HepG2 (cell line): ENCODE measurements at regions of chr10 and their contacts with region 1.

Region 1: DNA sequence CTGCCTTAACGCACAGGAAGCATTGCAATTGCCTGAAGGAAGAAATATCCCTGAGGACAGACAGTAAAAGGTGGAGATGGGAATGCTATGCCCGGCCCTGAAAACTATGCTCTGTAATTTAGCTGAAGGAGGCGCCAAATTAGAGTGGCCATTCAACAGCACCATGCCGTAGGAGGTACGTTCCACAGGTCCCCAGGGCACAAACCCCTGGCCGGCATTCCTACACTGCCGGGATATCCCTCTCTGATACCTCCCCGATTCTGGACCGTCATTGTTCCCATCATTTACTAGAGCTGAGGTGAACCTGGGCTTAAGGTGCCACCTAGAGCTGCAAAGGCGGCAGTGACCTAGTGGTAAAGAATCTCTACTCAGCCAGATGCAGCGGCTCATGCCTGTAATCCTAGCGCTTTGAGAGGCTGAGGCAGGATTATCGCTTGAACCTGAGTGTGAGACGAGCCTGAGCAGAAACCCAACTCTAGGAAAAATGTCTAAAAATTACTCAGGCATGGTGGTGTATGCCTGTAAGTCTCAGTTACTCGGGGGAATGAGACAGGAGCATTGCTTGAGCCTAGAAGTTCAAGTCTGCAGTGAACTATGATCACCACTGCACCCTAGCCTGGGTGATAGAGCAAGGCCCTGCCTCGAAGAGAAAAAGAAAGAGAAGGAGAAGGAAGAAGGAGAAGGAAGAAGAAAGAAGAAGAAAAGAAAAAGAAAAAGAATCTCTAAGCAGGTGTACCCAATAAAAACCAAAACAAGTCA is 53.0 kb upstream of the TNKS2 start:
- DNase-seq: peak; percentile 50
- ATAC-seq: peak; percentile 100
- H3K4me3 ChIP-seq: peak overlapping the region in 1 of 3 experiments; percentile 33; a peak in 2 of 6 replicates
- H3K27ac ChIP-seq: no peak overlapping the region
- H3K4me1 ChIP-seq: peaks cover 11% of the 10 kb centered on the region
- H3K27me3 ChIP-seq: no peaks in the 10 kb centered on the region
- CTCF ChIP-seq: peak; percentile 89
- EP300 ChIP-seq: no peak
- POLR2A ChIP-seq: no peak
- RAD21 ChIP-seq: peak; percentile 62; the same call in 1 of the 2 replicates

Region 2: DNA sequence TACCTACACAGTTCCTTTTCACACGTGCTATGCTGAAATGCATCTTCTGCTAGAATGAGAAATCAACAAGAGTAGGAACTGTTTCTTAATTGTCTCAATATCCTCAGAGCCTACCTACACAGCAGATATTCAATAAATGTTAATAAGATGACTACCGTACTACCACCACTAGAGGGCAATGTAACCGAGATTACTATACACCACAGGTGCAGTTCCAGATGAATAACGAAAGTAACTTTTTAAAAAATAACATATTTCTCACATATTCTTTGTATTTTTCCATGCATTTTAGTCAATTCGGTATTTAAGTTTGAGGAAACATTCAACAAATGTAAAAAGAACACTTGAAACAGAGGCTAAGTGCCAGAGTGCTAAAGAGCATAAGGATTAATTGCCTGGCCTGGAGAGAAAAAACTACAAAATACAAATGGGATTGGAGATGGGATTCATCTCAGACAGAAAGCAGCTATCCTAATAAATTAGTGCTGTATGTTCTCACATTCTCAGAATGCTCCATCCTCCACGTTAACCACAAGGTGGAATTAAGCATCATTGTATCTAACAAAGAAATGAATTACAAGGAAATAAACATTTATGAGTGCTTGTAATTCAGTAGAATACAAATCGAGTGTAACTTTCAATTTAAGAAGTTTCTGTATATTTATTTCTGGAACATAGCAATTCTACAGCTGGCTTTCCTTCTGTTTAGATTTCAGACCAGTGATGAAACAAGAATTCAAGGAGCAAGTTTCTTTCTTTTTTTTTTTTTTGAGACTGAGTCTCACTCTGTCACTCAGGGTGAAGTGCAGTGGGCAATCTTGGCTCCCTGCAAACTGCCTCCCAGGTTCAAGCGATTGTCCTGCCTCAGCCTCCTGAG is 355.4 kb before region 1 on chr10:
- CTCF ChIA-PET with region 1: interaction called, 4 read pairs
- POLR2A ChIA-PET with region 1: no interaction called
- in situ Hi-C with region 1: no loop called
- intact Hi-C with region 1: loop called (anchors 5 kb)
- DNase-seq: peak; percentile 54
- ATAC-seq: peak; percentile 88
- H3K4me3 ChIP-seq: peak overlapping the region in 2 of 3 experiments; percentile 12 to 22; a peak in 2 of 6 replicates
- H3K27ac ChIP-seq: no peak overlapping the region
- H3K4me1 ChIP-seq: peaks cover 8% of the 10 kb centered on the region; the same call in 1 of the 2 replicates
- H3K27me3 ChIP-seq: peaks cover 0 to 9% of the 10 kb centered on the region in 2 experiments; a peak in 2 of 5 replicates
- CTCF ChIP-seq: peak; percentile 67
- EP300 ChIP-seq: no peak
- POLR2A ChIP-seq: no peak
- RAD21 ChIP-seq: 0 out of 2 replicates have a peak, but pooled peaks have one; percentile 26

Region 3: GRCh38 chr10:91409869-91410637 is 335.2 kb before region 1 on chr10 and contains the start of gene HECTD2:
- CTCF ChIA-PET with region 1: no interaction called
- POLR2A ChIA-PET with region 1: no interaction called
- in situ Hi-C with region 1: no loop called
- intact Hi-C with region 1: loop called (anchors 10 kb)
- DNase-seq: peak; percentile 49
- ATAC-seq: peak; percentile 87
- H3K4me3 ChIP-seq: peak within 1 kb of the TSS; percentile 68 to 99 (median 74)
- H3K27ac ChIP-seq: peak within 1 kb of the TSS; percentile 97
- H3K4me1 ChIP-seq: peaks cover 25% of the 10 kb centered on the region
- H3K27me3 ChIP-seq: peaks cover 2 to 7% of the 10 kb centered on the region in 2 experiments; a peak in 2 of 5 replicates
- CTCF ChIP-seq: peak; percentile 46; the same call in 1 of the 2 replicates
- EP300 ChIP-seq: no peak
- POLR2A ChIP-seq: peak; percentile 67 to 85
- RAD21 ChIP-seq: peak; percentile 64
- total RNA-seq, gene HECTD2: 5.1 and 5.2 TPM in 2 replicates

Region 4: DNA sequence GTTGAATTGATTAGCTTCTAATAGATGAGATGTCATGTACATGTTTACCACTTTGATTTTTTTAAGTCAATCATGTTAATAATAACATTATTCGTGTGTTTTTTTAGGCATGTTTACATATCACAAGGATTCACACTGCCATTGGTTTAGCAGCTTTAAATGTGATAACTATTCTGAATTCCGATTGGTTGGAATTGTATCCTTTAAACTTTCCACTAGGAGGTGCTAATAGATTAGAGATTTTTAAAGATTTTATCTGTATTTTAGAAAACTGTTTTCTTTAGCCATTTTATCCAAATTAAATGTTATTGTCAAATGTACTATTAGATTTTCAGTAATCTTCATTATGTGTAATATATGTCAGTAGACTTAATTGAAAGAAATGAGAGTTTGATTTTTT is 251.9 kb before region 1 on chr10:
- CTCF ChIA-PET with region 1: interaction called, 4 read pairs
- POLR2A ChIA-PET with region 1: no interaction called
- in situ Hi-C with region 1: no loop called
- intact Hi-C with region 1: loop called (anchors 10 kb)
- DNase-seq: peak; percentile 41
- ATAC-seq: peak; percentile 50; the same call in 2 of the 3 replicates
- H3K4me3 ChIP-seq: no peak overlapping the region
- H3K27ac ChIP-seq: no peak overlapping the region
- H3K4me1 ChIP-seq: no peaks in the 10 kb centered on the region
- H3K27me3 ChIP-seq: no peaks in the 10 kb centered on the region
- CTCF ChIP-seq: peak; percentile 50
- EP300 ChIP-seq: no peak
- POLR2A ChIP-seq: no peak
- RAD21 ChIP-seq: no peak

Region 5: GRCh38 chr10:91556691-91557566 is 188.3 kb before region 1 on chr10:
- CTCF ChIA-PET with region 1: no interaction called
- POLR2A ChIA-PET with region 1: no interaction called
- in situ Hi-C with region 1: no loop called
- intact Hi-C with region 1: loop called (anchors 5 kb)
- DNase-seq: peak; percentile 95
- ATAC-seq: peak; percentile 95
- H3K4me3 ChIP-seq: peak overlapping the region in 1 of 3 experiments; percentile 34; a peak in 1 of 6 replicates
- H3K27ac ChIP-seq: peak overlapping the region; percentile 87
- H3K4me1 ChIP-seq: peaks cover 96% of the 10 kb centered on the region
- H3K27me3 ChIP-seq: no peaks in the 10 kb centered on the region
- CTCF ChIP-seq: no peak
- EP300 ChIP-seq: peak; percentile 31 to 94; a peak in 2 of 4 replicates
- POLR2A ChIP-seq: 0 out of 4 replicates have a peak, but pooled peaks have one; percentile 11 to 33
- RAD21 ChIP-seq: peak; percentile 19; the same call in 1 of the 2 replicates

Region 6: GRCh38 chr10:91643700-91644099 is 101.6 kb before region 1 on chr10:
- CTCF ChIA-PET with region 1: interaction called, 10 read pairs
- POLR2A ChIA-PET with region 1: no interaction called
- in situ Hi-C with region 1: loop called (anchors 10 kb)
- intact Hi-C with region 1: loop called (anchors 1 kb)
- DNase-seq: peak; percentile 24
- ATAC-seq: peak; percentile 89
- H3K4me3 ChIP-seq: no peak overlapping the region
- H3K27ac ChIP-seq: no peak overlapping the region
- H3K4me1 ChIP-seq: no peaks in the 10 kb centered on the region
- H3K27me3 ChIP-seq: peaks cover 0 to 1% of the 10 kb centered on the region in 2 experiments; a peak in 1 of 5 replicates
- CTCF ChIP-seq: peak; percentile 76
- EP300 ChIP-seq: no peak
- POLR2A ChIP-seq: no peak
- RAD21 ChIP-seq: peak; percentile 52

Region 7: DNA sequence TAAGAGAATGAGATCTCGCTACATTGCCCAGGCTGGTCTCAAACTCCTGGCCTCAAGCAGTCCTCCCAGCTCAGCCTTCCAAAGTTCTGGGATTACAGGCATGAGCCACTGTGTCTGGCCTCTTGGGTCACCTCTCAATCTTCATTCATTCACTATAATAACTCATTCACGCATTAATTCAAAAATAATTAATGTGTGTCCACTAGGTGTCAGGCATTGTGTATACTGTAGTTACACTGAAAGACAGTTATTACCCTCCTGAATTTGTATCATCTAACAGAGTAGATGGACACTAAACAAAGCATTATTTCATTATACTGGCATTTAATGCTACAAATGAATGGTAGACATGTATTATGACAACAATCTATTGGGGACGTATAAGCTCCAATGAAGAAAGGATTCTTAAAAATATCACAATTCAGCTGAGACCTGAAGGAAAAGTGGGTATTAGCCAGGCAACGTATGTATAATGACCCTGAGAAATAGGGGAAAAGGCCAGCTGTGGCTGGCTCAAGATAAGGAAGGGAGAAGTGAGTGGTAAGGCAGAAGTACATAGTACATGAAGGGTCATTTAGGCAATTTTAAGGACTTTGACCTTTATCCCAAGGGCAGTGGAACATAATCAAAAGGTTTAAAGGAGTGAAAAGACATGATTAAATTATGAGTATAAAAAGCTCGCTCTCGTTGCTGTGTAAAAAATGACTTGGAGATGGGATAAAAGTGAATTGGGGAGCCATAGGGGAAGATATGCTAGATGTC is 329.1 kb after region 1 on chr10:
- CTCF ChIA-PET with region 1: no interaction called
- POLR2A ChIA-PET with region 1: no interaction called
- in situ Hi-C with region 1: no loop called
- intact Hi-C with region 1: no loop called
- DNase-seq: no peak
- ATAC-seq: no peak
- H3K4me3 ChIP-seq: no peak overlapping the region
- H3K27ac ChIP-seq: no peak overlapping the region
- H3K4me1 ChIP-seq: no peaks in the 10 kb centered on the region
- H3K27me3 ChIP-seq: no peaks in the 10 kb centered on the region
- CTCF ChIP-seq: 0 out of 2 replicates have a peak, but pooled peaks have one; percentile 11
- EP300 ChIP-seq: no peak
- POLR2A ChIP-seq: no peak
- RAD21 ChIP-seq: no peak